ENCODE measurements at regions of chr1 and their contacts with region 1.

Region 1: DNA sequence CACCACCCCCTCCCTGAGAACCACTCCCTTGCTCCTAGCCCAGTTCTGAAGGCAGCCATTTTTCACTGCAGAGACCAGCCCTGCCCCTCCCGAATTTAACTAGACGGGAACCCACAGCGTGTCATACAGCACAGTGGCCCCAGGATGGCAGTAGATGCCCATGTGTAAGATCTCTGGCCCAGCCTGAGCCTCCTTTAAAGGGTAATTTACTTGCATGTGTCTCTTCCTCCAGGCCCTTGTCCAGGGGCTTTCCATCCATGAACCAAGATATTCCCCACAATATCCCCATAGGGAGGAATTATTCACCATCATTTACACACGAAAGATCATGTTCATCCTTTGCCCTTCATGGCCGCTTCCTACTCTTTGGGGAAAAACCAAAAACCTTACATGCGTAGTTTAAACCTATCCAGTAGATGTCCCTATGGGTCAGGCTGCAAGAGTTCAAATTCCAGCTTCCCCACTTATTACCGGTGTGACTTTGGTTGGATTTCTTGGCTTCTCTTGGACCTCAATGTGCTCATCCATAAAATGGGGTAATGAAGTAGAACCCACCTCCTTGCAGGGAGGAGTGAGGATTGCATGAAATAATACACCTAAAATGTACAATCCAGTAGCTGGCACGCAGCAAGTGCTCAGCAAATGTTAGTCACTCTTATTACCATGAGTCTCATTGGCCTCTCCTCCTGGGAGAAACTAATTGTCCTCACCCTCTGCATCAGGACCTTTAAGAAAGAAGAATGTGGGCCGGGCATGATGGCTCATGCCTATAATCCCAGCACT is 4.0 kb upstream of the LACTBL1 start:
- DNase-seq: peak; percentile 88
- ATAC-seq: peak; percentile 99
- H3K4me3 ChIP-seq: peak overlapping the region in 1 of 2 experiments; percentile 43; a peak in 2 of 4 replicates
- H3K27ac ChIP-seq: peak overlapping the region; percentile 29; the same call in 1 of the 2 replicates
- H3K4me1 ChIP-seq: no peaks in the 10 kb centered on the region
- H3K27me3 ChIP-seq: no peaks in the 10 kb centered on the region
- CTCF ChIP-seq: peak; percentile 96

Region 2: DNA sequence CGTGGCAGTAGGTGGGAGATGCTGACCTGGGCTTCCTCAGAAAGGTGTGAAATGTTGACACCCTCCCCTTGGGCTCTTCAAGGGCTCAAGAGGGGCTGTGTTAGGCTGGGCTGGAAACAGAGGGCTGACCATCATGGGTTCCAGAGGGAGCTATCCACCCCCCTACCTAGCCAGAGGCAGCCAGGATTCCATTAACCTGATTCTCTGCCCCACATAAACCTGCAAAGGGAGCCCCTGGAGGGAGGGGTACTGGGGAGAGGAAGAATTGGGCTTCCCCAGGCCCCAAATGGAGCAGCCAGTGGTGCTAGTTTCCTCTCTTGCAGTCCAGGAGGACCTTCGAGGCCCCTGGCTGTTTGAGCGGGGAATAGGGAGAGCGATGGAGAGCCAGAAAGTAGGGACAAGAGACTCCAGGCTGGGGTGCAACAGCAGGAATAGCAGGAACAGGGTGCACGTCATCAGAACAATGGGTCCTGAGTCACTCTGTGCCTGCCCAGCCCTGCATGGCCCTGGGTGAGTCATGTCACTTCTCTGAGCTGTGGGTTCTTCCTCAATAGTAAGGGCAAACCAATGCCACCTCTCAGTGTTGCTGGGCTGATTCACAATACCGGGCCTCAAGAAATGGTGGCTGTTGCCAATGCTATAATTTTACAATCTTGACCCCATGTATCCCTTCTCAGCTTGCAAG is 144.8 kb before region 1 on chr1:
- CTCF ChIA-PET with region 1: no interaction called
- POLR2A ChIA-PET with region 1: no interaction called
- in situ Hi-C with region 1: no loop called
- intact Hi-C with region 1: no loop called
- DNase-seq: peak; percentile 83
- ATAC-seq: peak; percentile 97
- H3K4me3 ChIP-seq: no peak overlapping the region
- H3K27ac ChIP-seq: peak overlapping the region; percentile 55; the same call in 1 of the 2 replicates
- H3K4me1 ChIP-seq: peaks cover 14% of the 10 kb centered on the region
- H3K27me3 ChIP-seq: no peaks in the 10 kb centered on the region
- CTCF ChIP-seq: no peak

Region 3: DNA sequence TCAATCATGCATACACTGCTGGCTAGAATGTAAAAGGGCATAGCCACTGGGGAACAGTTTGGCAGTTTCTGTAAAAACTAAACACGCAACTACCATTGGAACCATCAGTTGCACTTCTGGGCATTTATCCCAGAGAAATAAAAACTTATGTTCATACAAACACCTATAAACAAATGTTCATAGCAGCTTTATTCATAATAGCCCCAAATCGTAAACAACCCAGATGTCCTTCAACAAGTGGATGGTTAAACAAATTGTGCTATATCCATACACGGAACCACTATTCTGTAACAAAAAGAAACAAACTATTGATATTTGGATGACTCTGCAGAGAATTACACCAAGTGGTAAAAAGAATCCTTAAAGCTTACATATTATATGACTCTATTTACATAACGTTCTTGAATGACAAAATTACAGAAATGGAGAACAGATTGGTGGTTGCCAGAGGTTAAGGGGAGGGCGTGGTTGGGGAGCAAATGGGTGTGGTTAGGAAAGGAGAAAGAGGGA is 26.8 kb before region 1 on chr1:
- CTCF ChIA-PET with region 1: no interaction called
- POLR2A ChIA-PET with region 1: no interaction called
- in situ Hi-C with region 1: no loop called
- intact Hi-C with region 1: no loop called
- DNase-seq: no peak
- ATAC-seq: peak; percentile 56; the same call in 1 of the 2 replicates
- H3K4me3 ChIP-seq: no peak overlapping the region
- H3K27ac ChIP-seq: no peak overlapping the region
- H3K4me1 ChIP-seq: no peaks in the 10 kb centered on the region
- H3K27me3 ChIP-seq: no peaks in the 10 kb centered on the region
- CTCF ChIP-seq: no peak

Region 4: DNA sequence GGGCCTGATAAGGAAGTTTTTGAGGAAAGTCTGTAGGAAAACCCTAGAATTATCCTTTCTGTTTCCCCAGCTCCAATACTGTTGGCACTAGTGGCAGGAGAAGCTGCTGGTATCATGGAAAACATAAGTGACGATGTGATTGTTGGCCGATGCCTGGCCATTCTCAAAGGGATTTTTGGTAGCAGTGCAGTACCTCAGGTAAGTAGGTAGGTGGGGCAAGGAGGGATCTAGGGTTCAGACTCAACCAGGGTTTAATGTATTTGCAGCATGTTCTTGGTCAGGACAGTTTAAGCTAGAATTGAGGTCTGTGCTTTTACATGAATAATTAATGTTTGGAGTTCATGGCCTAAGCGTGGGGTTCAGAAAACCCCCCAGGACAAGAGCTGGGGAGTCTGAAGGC is 104.7 kb after region 1 on chr1:
- CTCF ChIA-PET with region 1: no interaction called
- POLR2A ChIA-PET with region 1: no interaction called
- in situ Hi-C with region 1: no loop called
- intact Hi-C with region 1: loop called (anchors 5 kb)
- DNase-seq: no peak
- ATAC-seq: 0 out of 2 replicates have a peak, but pooled peaks have one; percentile 47
- H3K4me3 ChIP-seq: no peak overlapping the region
- H3K27ac ChIP-seq: no peak overlapping the region
- H3K4me1 ChIP-seq: no peaks in the 10 kb centered on the region
- H3K27me3 ChIP-seq: no peaks in the 10 kb centered on the region
- CTCF ChIP-seq: peak; percentile 49; the same call in 1 of the 2 replicates

Region 5: GRCh38 chr1:23184212-23184934 is 207.7 kb after region 1 on chr1:
- CTCF ChIA-PET with region 1: interaction called, 5 read pairs
- POLR2A ChIA-PET with region 1: interaction called, 5 read pairs
- in situ Hi-C with region 1: no loop called
- intact Hi-C with region 1: loop called (anchors 2 kb)
- DNase-seq: no peak
- ATAC-seq: peak; percentile 71
- H3K4me3 ChIP-seq: peak overlapping the region; percentile 8 to 54; a peak in 3 of 4 replicates
- H3K27ac ChIP-seq: no peak overlapping the region
- H3K4me1 ChIP-seq: peaks cover 6% of the 10 kb centered on the region
- H3K27me3 ChIP-seq: no peaks in the 10 kb centered on the region
- CTCF ChIP-seq: peak; percentile 85

Region 6: GRCh38 chr1:23273450-23274133 is 296.9 kb after region 1 on chr1:
- CTCF ChIA-PET with region 1: no interaction called
- POLR2A ChIA-PET with region 1: no interaction called
- in situ Hi-C with region 1: no loop called
- intact Hi-C with region 1: loop called (anchors 10 kb)
- DNase-seq: no peak
- ATAC-seq: peak; percentile 56
- H3K4me3 ChIP-seq: no peak overlapping the region
- H3K27ac ChIP-seq: no peak overlapping the region
- H3K4me1 ChIP-seq: peaks cover 2% of the 10 kb centered on the region
- H3K27me3 ChIP-seq: no peaks in the 10 kb centered on the region
- CTCF ChIP-seq: no peak